ENCODE measurements at regions of chr5 and their contacts with region 1.

Region 1: GRCh38 chr5:177592010-177592834 is at the start of gene TMED9:
- DNase-seq: peak; percentile 82
- ATAC-seq: peak; percentile 99
- H3K4me3 ChIP-seq: peak within 1 kb of the TSS; percentile 80
- H3K27ac ChIP-seq: peak within 1 kb of the TSS; percentile 96
- H3K4me1 ChIP-seq: peaks cover 3% of the 10 kb centered on the region; the same call in 1 of the 2 replicates
- H3K27me3 ChIP-seq: no peaks in the 10 kb centered on the region
- CTCF ChIP-seq: no peak
- POLR2A ChIP-seq: peak; percentile 96
- RAD21 ChIP-seq: no peak
- total RNA-seq, gene TMED9: 123 and 142 TPM in 2 replicates

Region 2: GRCh38 chr5:177516604-177517568 is 75.3 kb before region 1 on chr5 and contains the start of gene DDX41:
- CTCF ChIA-PET with region 1: no interaction called
- POLR2A ChIA-PET with region 1: no interaction called
- dilution Hi-C with region 1: no loop called
- in situ Hi-C with region 1: no loop called
- intact Hi-C with region 1: loop called (anchors 2 kb)
- DNase-seq: peak; percentile 99
- ATAC-seq: peak; percentile 89
- H3K4me3 ChIP-seq: peak within 1 kb of the TSS; percentile 70
- H3K27ac ChIP-seq: peak within 1 kb of the TSS; percentile 84
- H3K4me1 ChIP-seq: peaks cover 7% of the 10 kb centered on the region
- H3K27me3 ChIP-seq: no peaks in the 10 kb centered on the region
- CTCF ChIP-seq: no peak
- POLR2A ChIP-seq: peak; percentile 51; the same call in 1 of the 2 replicates
- RAD21 ChIP-seq: no peak
- total RNA-seq, gene DDX41: 130 and 141 TPM in 2 replicates

Region 3: GRCh38 chr5:177553671-177554429 is 38.4 kb before region 1 on chr5:
- CTCF ChIA-PET with region 1: no interaction called
- POLR2A ChIA-PET with region 1: no interaction called
- dilution Hi-C with region 1: no loop called
- in situ Hi-C with region 1: no loop called
- intact Hi-C with region 1: loop called (anchors 2 kb)
- DNase-seq: no peak
- ATAC-seq: peak; percentile 61
- H3K4me3 ChIP-seq: peak overlapping the region; percentile 92
- H3K27ac ChIP-seq: peak overlapping the region; percentile 80
- H3K4me1 ChIP-seq: peaks cover 14% of the 10 kb centered on the region
- H3K27me3 ChIP-seq: no peaks in the 10 kb centered on the region
- CTCF ChIP-seq: no peak
- POLR2A ChIP-seq: no peak
- RAD21 ChIP-seq: no peak